Spleen (tissue), 13 donors: ENCODE measurements at regions of chr5 and their contacts with region 1.

Region 1: GRCh38 chr5:177113566-177114424 is 19.8 kb upstream of the NSD1 start:
- DNase-seq: peak; percentile 92
- H3K4me3 ChIP-seq: peak overlapping the region in 2 of 8 donors; percentile 9 to 56
- H3K27ac ChIP-seq: peak overlapping the region; percentile 55 to 82 (median 76)
- H3K4me1 ChIP-seq: peaks cover 7 to 49% (median 34%) of the 10 kb centered on the region in 6 donors
- H3K27me3 ChIP-seq: no peaks in the 10 kb centered on the region
- CTCF ChIP-seq: peak; percentile 95 to 100 (median 99)
- POLR2A ChIP-seq: no peak

Region 2: GRCh38 chr5:176716320-176716719 is 397.5 kb before region 1 on chr5:
- intact Hi-C with region 1: no loop called
- DNase-seq: no peak
- H3K4me3 ChIP-seq: no peak overlapping the region
- H3K27ac ChIP-seq: no peak overlapping the region
- H3K4me1 ChIP-seq: no peaks in the 10 kb centered on the region
- H3K27me3 ChIP-seq: peaks cover 0 to 79% (median 22%) of the 10 kb centered on the region in 7 donors
- CTCF ChIP-seq: no peak
- POLR2A ChIP-seq: no peak

Region 3: DNA sequence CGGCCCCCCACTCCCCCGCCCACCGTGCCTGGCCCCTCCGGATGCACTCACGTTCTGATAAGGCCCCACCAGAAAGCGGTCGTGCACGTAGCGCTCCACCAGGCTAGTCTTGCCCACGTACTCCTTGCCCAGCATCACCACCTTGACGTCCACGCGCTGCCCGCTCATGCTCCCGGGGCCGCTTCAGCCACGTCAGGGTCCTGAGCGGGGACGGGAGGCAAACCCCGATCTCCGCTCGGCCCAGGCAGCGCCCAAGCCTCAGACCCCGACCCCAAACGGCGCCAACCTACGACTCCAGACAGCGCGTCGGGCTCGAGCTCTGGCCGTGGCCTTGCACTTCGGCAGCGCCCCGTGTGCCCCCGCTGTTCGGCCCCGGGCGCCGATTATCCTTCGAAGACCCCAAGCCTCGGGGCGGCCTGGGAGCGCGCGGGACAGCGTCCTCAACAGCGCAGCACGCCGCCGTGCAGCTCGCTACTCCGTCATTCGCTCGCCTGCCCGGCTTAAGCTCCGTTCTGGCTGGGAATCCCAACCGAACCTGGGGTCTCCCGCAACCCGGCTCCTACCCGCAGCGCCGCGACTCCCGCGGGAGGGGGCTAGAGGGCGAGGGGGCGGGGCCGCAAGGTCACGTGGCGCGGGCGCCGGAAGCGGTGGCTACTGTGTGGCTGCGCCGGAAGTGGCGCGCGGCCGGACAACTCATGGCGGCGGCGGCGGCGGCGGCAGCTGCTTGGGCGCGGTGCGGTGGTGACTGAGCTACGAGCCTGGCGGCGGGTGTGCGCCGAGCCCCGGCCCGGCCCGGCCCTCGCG is 189.5 kb after region 1 on chr5 and contains the starts of genes PRELID1 and RAB24:
- intact Hi-C with region 1: loop called (anchors 10 kb)
- DNase-seq: peak; percentile 97
- H3K4me3 ChIP-seq: peak within 1 kb of the TSS; percentile 77 to 99 (median 96)
- H3K27ac ChIP-seq: peak within 1 kb of the TSS; percentile 87 to 94 (median 92)
- H3K4me1 ChIP-seq: peaks cover 46 to 94% (median 88%) of the 10 kb centered on the region in 6 donors
- H3K27me3 ChIP-seq: no peaks in the 10 kb centered on the region
- CTCF ChIP-seq: peak in 6 of 11 experiments; percentile 39 to 63 (median 46)
- POLR2A ChIP-seq: peak in 2 of 3 donors; percentile 27 to 44
- total RNA-seq, gene PRELID1: 74.5 to 173 (median 106) TPM
- total RNA-seq, gene RAB24: 52.1 to 90.4 (median 80.8) TPM